CD8-positive, alpha-beta T cell (primary cell): ENCODE measurements at regions of chr2 and their contacts with region 1.

Region 1: DNA sequence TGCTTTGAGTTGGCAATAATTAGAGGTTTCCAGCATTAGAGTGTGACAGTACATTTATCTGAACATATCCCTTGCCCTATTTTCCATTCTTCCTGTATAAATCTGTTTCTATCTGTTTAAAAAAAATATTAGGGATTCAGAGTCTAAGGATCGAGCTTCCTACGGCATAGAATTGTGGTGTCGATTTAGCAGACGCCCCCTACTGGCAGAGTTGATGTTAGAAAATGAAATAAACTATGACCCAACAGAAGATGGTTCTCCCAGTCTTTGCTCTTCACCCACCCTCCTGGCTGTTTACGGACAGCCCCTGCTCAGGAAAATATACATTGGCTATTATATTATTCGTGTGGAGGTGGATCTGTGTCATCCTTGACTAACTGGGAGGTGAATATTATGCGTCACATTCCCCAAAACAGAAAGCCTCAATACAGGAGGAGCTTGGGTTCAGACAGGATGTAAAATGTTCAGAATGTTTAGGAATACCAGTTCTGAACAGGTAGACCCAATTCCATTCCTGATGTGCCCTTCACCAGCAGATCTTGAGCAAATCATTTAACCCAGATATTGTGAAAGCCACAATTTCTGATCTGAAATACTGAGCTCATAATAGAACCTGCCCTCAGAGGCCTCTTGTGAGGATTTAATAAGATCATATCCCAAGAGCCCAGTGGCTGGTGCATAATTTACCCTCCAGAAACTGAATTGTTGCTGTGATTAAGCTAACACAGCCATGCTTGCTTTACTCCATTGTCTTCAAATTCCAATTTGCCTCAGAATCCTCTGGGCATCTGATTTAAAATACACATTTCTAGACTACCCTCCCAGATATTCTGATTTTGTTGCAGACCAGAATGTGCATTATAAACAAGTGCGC is 10.8 kb upstream of the ERMN start:
- DNase-seq: peak in 8 of 9 experiments; percentile 4 to 73 (median 54)
- ATAC-seq: peak; percentile 35
- H3K4me3 ChIP-seq: peak overlapping the region in 1 of 2 experiments; percentile 9
- H3K4me3 Mint-ChIP-seq: peak overlapping the region; percentile 17
- H3K27ac ChIP-seq: no peak overlapping the region
- H3K27ac Mint-ChIP-seq: peak overlapping the region; percentile 20
- H3K4me1 ChIP-seq: peaks cover 32% of the 10 kb centered on the region
- H3K4me1 Mint-ChIP-seq: peaks cover 74% of the 10 kb centered on the region
- H3K27me3 ChIP-seq: no peaks in the 10 kb centered on the region
- H3K27me3 Mint-ChIP-seq: no peaks in the 10 kb centered on the region
- CTCF ChIP-seq: peak; percentile 71

Region 2: DNA sequence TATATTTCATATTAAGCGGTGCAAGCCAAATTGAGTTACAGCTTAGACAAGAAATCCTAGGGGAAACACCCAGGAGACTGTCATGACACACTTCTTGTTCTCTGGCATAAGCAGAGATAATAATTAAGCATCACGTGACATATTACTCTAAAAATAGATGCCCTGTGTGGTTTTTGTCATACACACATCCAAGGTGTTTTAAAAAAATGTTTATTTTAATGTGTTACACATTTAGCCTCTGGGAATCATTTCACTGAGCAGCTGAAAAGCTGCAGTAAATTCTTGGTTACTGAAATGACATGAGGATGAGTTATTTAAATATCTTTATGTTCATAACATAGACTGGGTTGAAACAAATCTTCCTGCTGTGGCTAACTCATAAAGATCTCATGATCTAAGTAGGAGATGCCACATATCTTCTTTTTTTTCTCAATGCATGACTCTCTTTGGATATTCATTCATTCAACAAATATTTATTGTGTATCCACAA is 27.3 kb after region 1 on chr2:
- CTCF ChIA-PET with region 1: interaction called, 10 read pairs
- POLR2A ChIA-PET with region 1: no interaction called
- intact Hi-C with region 1: no loop called
- DNase-seq: peak in 1 of 9 experiments; percentile 33
- ATAC-seq: no peak
- H3K4me3 ChIP-seq: no peak overlapping the region
- H3K4me3 Mint-ChIP-seq: peak overlapping the region; percentile 6
- H3K27ac ChIP-seq: peak overlapping the region in 1 of 2 experiments; percentile 34
- H3K27ac Mint-ChIP-seq: peak overlapping the region; percentile 29
- H3K4me1 ChIP-seq: peaks cover 29% of the 10 kb centered on the region
- H3K4me1 Mint-ChIP-seq: peaks cover 46% of the 10 kb centered on the region
- H3K27me3 ChIP-seq: no peaks in the 10 kb centered on the region
- H3K27me3 Mint-ChIP-seq: no peaks in the 10 kb centered on the region
- CTCF ChIP-seq: no peak

Region 3: DNA sequence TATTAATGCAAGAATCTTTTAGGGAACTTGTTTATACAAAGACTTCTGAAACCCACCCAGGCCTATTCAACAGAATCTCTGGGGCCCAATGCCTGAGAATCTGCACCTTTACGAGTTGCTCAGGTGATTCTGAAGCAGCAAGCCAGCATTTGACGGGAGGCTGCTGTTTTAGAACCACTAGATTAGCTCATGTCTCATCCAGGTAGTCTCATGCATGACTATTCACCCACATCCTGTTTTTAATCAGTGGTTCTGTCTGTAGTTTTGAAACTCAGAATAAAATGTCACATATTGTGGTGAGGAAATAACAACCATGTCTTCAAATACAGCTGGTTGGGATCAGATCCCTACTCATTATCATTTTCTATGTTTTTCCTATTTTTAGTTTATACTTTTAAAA is 68.0 kb after region 1 on chr2:
- CTCF ChIA-PET with region 1: interaction called, 12 read pairs
- POLR2A ChIA-PET with region 1: interaction called, 7 read pairs
- intact Hi-C with region 1: no loop called
- DNase-seq: peak; percentile 56 to 92 (median 72)
- ATAC-seq: peak; percentile 92
- H3K4me3 ChIP-seq: no peak overlapping the region
- H3K4me3 Mint-ChIP-seq: peak overlapping the region; percentile 44
- H3K27ac ChIP-seq: peak overlapping the region; percentile 65 to 69
- H3K27ac Mint-ChIP-seq: peak overlapping the region; percentile 99
- H3K4me1 ChIP-seq: peaks cover 55% of the 10 kb centered on the region
- H3K4me1 Mint-ChIP-seq: peaks cover 69% of the 10 kb centered on the region
- H3K27me3 ChIP-seq: no peaks in the 10 kb centered on the region
- H3K27me3 Mint-ChIP-seq: no peaks in the 10 kb centered on the region
- CTCF ChIP-seq: no peak

Region 4: DNA sequence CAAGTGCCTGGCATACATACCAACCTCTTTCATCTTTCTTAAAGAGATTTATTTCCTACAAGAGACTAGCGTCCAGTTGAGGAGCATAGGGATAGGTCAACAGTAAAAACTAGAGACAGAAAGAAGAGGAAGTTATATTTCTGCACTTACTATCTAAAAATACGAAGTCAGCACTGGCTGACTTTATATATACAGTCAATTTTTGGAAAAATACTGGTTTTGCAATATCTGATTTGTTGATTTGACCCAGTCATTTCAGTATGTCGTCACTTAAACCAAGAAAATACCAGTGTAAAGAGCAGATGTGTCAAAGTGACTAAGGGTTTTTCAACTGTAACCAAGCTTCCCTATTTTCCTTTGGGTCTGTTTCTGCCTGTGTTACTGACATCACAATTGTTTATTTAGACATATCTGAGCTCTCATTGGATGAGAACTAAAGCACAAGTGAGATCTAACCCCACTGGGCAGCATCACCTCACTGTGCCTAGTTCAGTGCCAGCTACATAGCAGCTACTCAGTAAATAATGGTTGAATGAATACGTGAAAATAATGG is 84.5 kb after region 1 on chr2:
- CTCF ChIA-PET with region 1: interaction called, 21 read pairs
- POLR2A ChIA-PET with region 1: interaction called, 7 read pairs
- intact Hi-C with region 1: no loop called
- DNase-seq: peak in 2 of 9 experiments; percentile 52 to 72
- ATAC-seq: peak; percentile 19
- H3K4me3 ChIP-seq: no peak overlapping the region
- H3K4me3 Mint-ChIP-seq: peak overlapping the region; percentile 47
- H3K27ac ChIP-seq: peak overlapping the region; percentile 2 to 84
- H3K27ac Mint-ChIP-seq: peak overlapping the region; percentile 94
- H3K4me1 ChIP-seq: peaks cover 66% of the 10 kb centered on the region
- H3K4me1 Mint-ChIP-seq: peaks cover 73% of the 10 kb centered on the region
- H3K27me3 ChIP-seq: no peaks in the 10 kb centered on the region
- H3K27me3 Mint-ChIP-seq: no peaks in the 10 kb centered on the region
- CTCF ChIP-seq: no peak

Region 5: GRCh38 chr2:157898591-157898996 is 562.2 kb after region 1 on chr2:
- CTCF ChIA-PET with region 1: no interaction called
- POLR2A ChIA-PET with region 1: no interaction called
- intact Hi-C with region 1: loop called in 1 of 2 experiments (anchors 10 kb)
- DNase-seq: peak in 8 of 9 experiments; percentile 26 to 68 (median 52)
- ATAC-seq: peak; percentile 74
- H3K4me3 ChIP-seq: no peak overlapping the region
- H3K4me3 Mint-ChIP-seq: peak overlapping the region; percentile 84
- H3K27ac ChIP-seq: peak overlapping the region in 1 of 2 experiments; percentile 67
- H3K27ac Mint-ChIP-seq: peak overlapping the region; percentile 99
- H3K4me1 ChIP-seq: peaks cover 53% of the 10 kb centered on the region
- H3K4me1 Mint-ChIP-seq: peaks cover 66% of the 10 kb centered on the region
- H3K27me3 ChIP-seq: no peaks in the 10 kb centered on the region
- H3K27me3 Mint-ChIP-seq: no peaks in the 10 kb centered on the region
- CTCF ChIP-seq: no peak